Caki2 (cell line): ENCODE measurements at regions of chr10 and their contacts with region 1.

Region 1: GRCh38 chr10:63711867-63712716 is 190.9 kb downstream of the REEP3 start:
- DNase-seq: peak; percentile 96

Region 2: GRCh38 chr10:63515002-63515763 is 196.9 kb before region 1 on chr10:
- in situ Hi-C with region 1: loop called (anchors 10 kb)
- DNase-seq: peak; percentile 14